Activated CD4-positive, alpha-beta T cell treated with anti-CD3 and anti-CD28 coated beads for 36 hours (primary cell): ENCODE measurements at regions of chr19 and their contacts with region 1.

Region 1: GRCh38 chr19:12994701-12995595 is at the start of gene NFIX:
- DNase-seq: peak; percentile 76
- ATAC-seq: peak; percentile 63
- H3K4me3 Mint-ChIP-seq: peak within 1 kb of the TSS; percentile 71
- H3K27ac Mint-ChIP-seq: peak within 1 kb of the TSS; percentile 68
- H3K4me1 Mint-ChIP-seq: peaks cover 7% of the 10 kb centered on the region
- H3K27me3 Mint-ChIP-seq: peaks cover 5% of the 10 kb centered on the region
- total RNA-seq, gene NFIX: 4.3 to 4.8 TPM

Region 2: DNA sequence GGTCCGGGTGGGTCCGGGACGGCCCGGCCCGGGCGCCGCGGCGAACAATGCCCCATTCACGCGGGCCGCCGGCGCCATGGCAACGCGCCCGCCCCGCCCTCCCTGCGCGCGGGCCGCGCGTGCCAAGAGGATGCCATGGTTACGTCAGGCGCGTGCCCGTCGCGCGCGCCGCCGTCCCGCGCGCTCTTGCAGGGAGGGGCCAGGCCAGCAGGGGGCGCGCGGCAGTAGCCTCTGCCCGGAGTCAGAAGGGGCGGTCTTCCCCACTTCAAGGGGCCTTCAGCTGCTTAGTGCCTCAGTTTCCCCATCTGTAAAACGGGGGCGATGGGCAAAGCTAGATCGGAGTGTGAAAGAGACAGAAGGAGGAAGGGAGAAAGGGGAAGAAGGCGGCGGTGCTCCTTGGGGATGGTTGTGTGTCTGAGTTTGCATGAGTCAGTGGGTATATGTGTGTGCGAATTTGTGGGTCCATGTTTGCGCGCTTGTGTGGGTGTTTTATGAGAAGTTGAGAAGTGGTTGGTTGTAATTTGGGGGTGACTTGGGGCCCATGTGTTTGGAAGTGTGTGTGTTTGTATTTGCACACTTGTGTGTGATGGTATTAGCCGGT is 11.3 kb before region 1 on chr19:
- CTCF ChIA-PET with region 1: no interaction called
- POLR2A ChIA-PET with region 1: no interaction called
- intact Hi-C with region 1: loop called in 1 of 2 experiments (anchors 1 kb)
- DNase-seq: peak; percentile 90
- ATAC-seq: peak; percentile 80
- H3K4me3 Mint-ChIP-seq: no peak overlapping the region
- H3K27ac Mint-ChIP-seq: no peak overlapping the region
- H3K4me1 Mint-ChIP-seq: no peaks in the 10 kb centered on the region
- H3K27me3 Mint-ChIP-seq: no peaks in the 10 kb centered on the region

Region 3: DNA sequence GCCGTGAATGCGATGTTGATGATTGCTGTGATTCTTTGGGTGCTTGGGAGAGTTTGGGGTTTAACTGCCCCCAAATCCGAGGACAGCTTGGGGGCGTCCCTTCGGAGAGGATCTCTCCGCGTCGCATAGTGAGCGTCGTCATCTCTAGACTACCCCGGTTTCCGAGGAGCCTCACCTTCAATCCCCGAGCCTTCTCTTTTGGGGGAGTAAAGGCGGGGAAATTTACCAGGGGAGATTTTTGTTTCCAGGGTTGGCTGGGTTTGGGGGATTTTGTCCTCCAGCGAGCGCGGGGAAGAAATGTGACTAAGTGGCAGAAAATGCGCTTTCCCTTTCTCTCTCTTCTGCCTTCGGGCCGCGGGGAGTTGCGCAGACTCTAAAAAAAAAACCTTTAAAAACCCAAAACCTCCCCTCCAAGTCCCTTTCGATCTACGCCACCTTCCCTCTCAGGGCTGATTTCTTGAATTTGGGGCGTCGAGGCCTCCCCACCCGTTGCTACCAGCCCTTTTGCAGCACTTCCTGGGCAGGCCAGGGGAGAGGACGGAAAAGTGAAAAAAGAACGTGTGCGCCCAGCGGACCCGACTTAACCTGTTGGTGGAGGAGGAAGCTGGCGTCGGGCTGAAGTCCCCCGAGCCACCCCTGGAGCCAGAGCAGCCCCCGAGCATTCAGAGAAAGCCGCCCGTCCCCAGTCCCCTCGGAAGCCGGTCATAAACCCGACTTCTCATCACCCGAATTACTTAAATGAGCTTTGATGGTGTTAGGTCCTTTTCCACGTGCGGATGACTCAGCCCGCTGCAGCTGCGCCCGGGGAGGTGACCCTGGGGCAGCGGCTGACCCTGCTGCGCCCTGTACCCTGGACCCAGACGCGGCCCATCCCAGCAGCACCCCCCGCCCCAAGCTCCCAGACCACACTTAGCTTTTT is 18.0 kb after region 1 on chr19:
- CTCF ChIA-PET with region 1: interaction called, 3 read pairs
- POLR2A ChIA-PET with region 1: no interaction called
- intact Hi-C with region 1: loop called in 1 of 2 experiments (anchors 2 kb)
- DNase-seq: peak; percentile 67
- ATAC-seq: peak; percentile 59
- H3K4me3 Mint-ChIP-seq: peak overlapping the region; percentile 72
- H3K27ac Mint-ChIP-seq: peak overlapping the region; percentile 79
- H3K4me1 Mint-ChIP-seq: peaks cover 22% of the 10 kb centered on the region
- H3K27me3 Mint-ChIP-seq: peaks cover 63% of the 10 kb centered on the region

Region 4: DNA sequence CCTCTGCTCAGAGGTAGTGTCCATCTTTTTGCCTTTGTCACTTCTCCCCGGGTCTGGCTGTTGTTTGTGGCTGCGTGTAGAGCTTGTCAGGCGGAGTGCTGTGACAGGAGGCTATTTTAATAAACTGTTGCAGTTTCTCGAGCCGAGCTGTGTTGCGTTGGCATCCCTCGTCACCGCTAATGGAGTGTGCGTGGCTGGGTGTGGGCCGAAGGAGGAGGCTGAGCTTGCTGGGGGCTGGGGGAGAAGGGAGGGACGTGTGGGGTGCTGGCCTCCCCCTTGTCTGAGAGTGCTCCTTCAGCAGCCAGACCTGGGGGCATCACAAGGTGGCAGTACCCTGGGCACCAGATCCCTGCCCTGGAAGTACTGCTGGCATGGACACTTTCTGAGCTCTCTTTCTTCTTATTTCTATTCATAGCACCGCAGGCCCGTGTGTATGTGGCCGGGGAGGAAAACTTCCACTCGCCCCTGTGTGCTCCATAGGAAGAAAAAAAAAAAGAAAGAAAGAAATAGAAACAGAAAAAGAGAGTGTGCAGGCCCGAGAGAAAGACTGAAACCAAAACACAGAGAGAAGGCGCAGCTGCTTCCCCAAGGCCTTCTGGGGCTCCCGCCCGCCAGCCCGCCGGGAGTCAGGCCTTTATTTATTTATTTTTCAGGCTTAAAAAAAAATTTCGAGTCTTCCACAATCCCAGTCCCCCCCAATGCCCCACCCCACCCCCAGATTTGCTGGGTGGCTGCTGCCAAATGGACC is 27.3 kb after region 1 on chr19:
- CTCF ChIA-PET with region 1: no interaction called
- POLR2A ChIA-PET with region 1: no interaction called
- intact Hi-C with region 1: loop called in 1 of 2 experiments (anchors 1 kb)
- DNase-seq: peak; percentile 20
- ATAC-seq: no peak
- H3K4me3 Mint-ChIP-seq: no peak overlapping the region
- H3K27ac Mint-ChIP-seq: no peak overlapping the region
- H3K4me1 Mint-ChIP-seq: peaks cover 18% of the 10 kb centered on the region
- H3K27me3 Mint-ChIP-seq: peaks cover 35% of the 10 kb centered on the region